Heart left ventricle (tissue), 16 donors: ENCODE measurements at regions of chr1 and their contacts with region 1.

Region 1: GRCh38 chr1:164440232-164440631 is 118.8 kb upstream of the PBX1 start:
- DNase-seq: peak in 4 of 5 donors; percentile 48 to 64 (median 56)
- ATAC-seq: peak; percentile 97 to 100 (median 100)
- H3K4me3 ChIP-seq: no peak overlapping the region
- H3K27ac ChIP-seq: no peak overlapping the region
- H3K4me1 ChIP-seq: peaks cover 0 to 14% (median 0%) of the 10 kb centered on the region in 12 donors
- H3K27me3 ChIP-seq: no peaks in the 10 kb centered on the region
- CTCF ChIP-seq: peak; percentile 18 to 66 (median 53)
- POLR2A ChIP-seq: no peak

Region 2: GRCh38 chr1:164177118-164177517 is 263.1 kb before region 1 on chr1:
- intact Hi-C with region 1: no loop called
- DNase-seq: no peak
- ATAC-seq: no peak
- H3K4me3 ChIP-seq: no peak overlapping the region
- H3K27ac ChIP-seq: no peak overlapping the region
- H3K4me1 ChIP-seq: no peaks in the 10 kb centered on the region
- H3K27me3 ChIP-seq: no peaks in the 10 kb centered on the region
- CTCF ChIP-seq: no peak
- POLR2A ChIP-seq: no peak

Region 3: DNA sequence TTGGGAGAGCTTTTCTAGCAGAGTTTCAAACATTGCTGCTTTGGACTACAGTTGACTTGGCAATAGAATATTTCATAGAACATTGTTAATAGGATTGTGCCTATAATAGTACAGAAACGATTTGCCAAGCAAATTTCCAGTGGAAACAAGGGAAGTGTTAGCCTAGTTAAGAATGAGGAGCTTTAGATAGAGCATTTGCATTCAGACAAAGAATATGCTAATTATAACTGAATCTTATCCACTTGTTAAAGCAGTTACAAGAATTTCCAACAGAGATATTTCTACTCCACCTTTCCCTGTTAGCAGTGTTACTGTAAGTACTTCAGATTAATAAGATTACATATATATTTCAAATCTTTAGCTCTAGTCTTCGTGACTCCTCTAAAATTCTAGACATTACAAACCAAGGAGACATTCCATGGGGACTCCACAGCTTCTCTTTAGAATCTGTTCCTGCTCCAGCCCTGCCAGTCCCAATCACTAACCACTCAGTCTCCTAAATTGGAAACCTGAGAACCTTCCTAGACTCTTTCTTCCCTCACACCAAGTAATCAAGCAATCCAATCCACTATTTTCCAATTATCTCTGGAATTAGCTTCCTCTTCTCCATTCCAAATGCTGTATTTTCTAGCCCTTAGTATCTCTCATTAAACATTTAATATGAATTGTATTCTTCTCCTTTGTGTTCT is 23.1 kb before region 1 on chr1:
- intact Hi-C with region 1: no loop called
- DNase-seq: no peak
- ATAC-seq: no peak
- H3K4me3 ChIP-seq: no peak overlapping the region
- H3K27ac ChIP-seq: no peak overlapping the region
- H3K4me1 ChIP-seq: no peaks in the 10 kb centered on the region
- H3K27me3 ChIP-seq: no peaks in the 10 kb centered on the region
- CTCF ChIP-seq: no peak
- POLR2A ChIP-seq: no peak

Region 4: DNA sequence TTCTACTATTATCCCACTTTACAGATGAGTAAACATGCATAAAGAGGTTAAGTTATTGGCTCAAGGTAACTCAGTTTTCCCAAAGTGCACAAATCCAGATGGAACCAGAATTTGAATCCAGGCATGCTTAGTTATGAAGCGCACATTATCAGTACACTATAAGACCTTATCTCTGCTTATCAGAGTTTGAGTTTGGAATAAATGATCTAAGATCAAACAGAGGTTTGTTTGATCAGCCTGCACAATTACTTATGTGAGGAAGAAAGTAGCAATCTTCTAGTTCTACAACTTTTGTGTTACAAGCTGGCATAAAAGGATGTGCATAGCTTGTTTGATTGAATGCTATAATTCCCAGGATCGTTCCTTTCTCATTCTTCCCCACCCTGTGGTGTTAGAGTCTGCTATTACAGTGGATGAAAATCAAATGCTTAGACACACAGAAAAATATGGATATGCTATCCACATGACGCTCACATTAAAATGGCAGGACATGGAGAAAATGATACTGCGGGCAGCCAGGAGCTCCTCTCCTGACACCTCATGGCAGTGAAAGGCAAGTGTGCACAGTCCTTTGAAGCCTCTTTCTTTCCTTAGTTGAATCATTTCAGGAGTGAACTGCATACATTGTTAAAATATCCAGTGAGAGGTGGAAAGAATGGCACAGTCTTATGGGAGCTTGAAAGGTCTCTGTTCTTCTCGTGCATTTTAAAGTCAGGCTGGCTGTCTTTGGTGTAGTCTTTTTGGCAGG is 94.8 kb after region 1 on chr1:
- intact Hi-C with region 1: loop called in 1 of 10 experiments (anchors 10 kb)
- DNase-seq: no peak
- ATAC-seq: peak in 2 of 4 donors; percentile 47 to 66
- H3K4me3 ChIP-seq: no peak overlapping the region
- H3K27ac ChIP-seq: no peak overlapping the region
- H3K4me1 ChIP-seq: no peaks in the 10 kb centered on the region
- H3K27me3 ChIP-seq: no peaks in the 10 kb centered on the region
- CTCF ChIP-seq: peak in 7 of 12 donors; percentile 17 to 34 (median 20)
- POLR2A ChIP-seq: no peak

Region 5: DNA sequence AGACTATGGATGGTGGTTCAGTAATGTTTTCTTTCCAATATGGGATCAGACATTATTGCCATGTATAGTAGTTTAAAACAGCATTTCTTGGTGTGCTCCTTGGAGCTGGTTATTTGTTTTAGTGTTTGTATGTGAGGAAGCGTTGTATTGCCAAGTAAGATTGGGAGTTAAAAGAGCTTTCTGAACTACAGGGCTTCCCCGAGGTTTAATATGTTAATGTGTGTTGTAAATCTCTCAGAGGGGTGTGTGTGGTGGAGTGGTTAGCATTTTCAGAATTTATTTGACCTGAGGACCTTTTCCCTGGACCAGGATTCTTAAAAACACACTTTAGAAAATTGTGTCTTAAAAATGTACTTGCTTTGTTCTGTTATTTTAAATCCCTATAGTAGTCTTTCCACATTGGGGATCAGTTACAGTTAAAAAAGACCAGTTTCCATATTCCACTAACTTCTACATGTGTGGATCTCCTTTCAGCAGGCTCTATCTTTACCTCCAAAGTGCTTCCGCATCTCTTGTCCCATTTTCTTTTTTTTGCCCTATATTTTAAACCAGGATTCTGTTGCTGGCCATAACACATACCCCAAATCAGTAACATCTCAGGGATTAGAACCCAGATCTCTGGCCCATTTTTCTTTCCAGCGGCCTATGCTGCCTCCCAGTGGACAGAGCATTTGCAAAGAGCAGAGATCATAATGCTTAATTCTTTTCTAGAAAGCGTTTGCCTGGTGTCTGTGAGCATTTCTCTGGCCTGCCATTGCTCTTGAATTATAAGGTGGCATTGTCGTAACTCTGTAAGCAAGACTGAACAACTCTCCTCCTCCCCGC is 177.4 kb after region 1 on chr1:
- intact Hi-C with region 1: loop called in 2 of 10 experiments (anchors 5 to 10 kb)
- DNase-seq: no peak
- ATAC-seq: no peak
- H3K4me3 ChIP-seq: no peak overlapping the region
- H3K27ac ChIP-seq: peak overlapping the region in 2 of 12 donors; percentile 35 to 73
- H3K4me1 ChIP-seq: peaks cover 4 to 91% (median 42%) of the 10 kb centered on the region in 12 donors
- H3K27me3 ChIP-seq: no peaks in the 10 kb centered on the region
- CTCF ChIP-seq: peak; percentile 18 to 58 (median 45)
- POLR2A ChIP-seq: no peak

Region 6: GRCh38 chr1:164625001-164625617 is 184.9 kb after region 1 on chr1:
- intact Hi-C with region 1: loop called in 1 of 10 experiments (anchors 5 kb)
- DNase-seq: no peak
- ATAC-seq: no peak
- H3K4me3 ChIP-seq: no peak overlapping the region
- H3K27ac ChIP-seq: peak overlapping the region in 1 of 12 donors; percentile 49
- H3K4me1 ChIP-seq: peaks cover 0 to 48% (median 24%) of the 10 kb centered on the region in 12 donors
- H3K27me3 ChIP-seq: no peaks in the 10 kb centered on the region
- CTCF ChIP-seq: peak in 5 of 12 donors; percentile 11 to 43 (median 24)
- POLR2A ChIP-seq: no peak

Region 7: GRCh38 chr1:164794310-164794709 is 354.1 kb after region 1 on chr1:
- intact Hi-C with region 1: loop called in 7 of 10 experiments (anchors 2 to 10 kb)
- DNase-seq: no peak
- ATAC-seq: peak; percentile 53 to 92 (median 78)
- H3K4me3 ChIP-seq: no peak overlapping the region
- H3K27ac ChIP-seq: peak overlapping the region in 3 of 12 donors; percentile 22 to 81 (median 42)
- H3K4me1 ChIP-seq: peaks cover 0 to 38% (median 4%) of the 10 kb centered on the region in 12 donors
- H3K27me3 ChIP-seq: no peaks in the 10 kb centered on the region
- CTCF ChIP-seq: no peak
- POLR2A ChIP-seq: no peak